IMR-90 (cell line): ENCODE measurements at regions of chr2 and their contacts with region 1.

Region 1: GRCh38 chr2:212213191-212213590 is 325.4 kb downstream of the ERBB4 start:
- DNase-seq: no peak
- ATAC-seq: no peak
- H3K4me3 ChIP-seq: no peak overlapping the region
- H3K27ac ChIP-seq: no peak overlapping the region
- H3K4me1 ChIP-seq: no peaks in the 10 kb centered on the region
- H3K27me3 ChIP-seq: no peaks in the 10 kb centered on the region
- CTCF ChIP-seq: no peak
- POLR2A ChIP-seq: no peak
- RAD21 ChIP-seq: no peak

Region 2: DNA sequence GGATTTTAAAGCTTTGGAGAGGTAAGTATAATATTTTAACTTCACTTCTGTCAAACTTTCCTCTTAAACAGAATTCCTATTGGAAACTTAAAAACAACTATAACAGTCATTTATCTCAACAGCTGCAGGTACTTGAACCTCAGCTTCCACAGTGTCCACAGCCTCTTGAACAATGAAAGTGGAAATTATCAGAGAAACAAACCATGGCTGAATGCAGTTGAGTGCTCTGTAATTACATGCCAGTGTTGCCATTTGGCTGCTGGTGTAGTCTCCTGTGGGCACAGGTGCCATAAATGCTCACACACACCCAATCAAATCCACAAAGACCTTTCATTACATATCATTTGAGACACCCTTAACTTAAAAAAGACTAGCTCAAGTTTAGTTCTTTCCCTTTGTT is 1531.7 kb before region 1 on chr2:
- CTCF ChIA-PET with region 1: no interaction called
- POLR2A ChIA-PET with region 1: no interaction called
- dilution Hi-C with region 1: no loop called
- in situ Hi-C with region 1: no loop called
- intact Hi-C with region 1: loop called (anchors 5 kb)
- DNase-seq: no peak
- ATAC-seq: no peak
- H3K4me3 ChIP-seq: no peak overlapping the region
- H3K27ac ChIP-seq: no peak overlapping the region
- H3K4me1 ChIP-seq: no peaks in the 10 kb centered on the region
- H3K27me3 ChIP-seq: no peaks in the 10 kb centered on the region
- CTCF ChIP-seq: no peak
- POLR2A ChIP-seq: no peak
- RAD21 ChIP-seq: no peak

Region 3: GRCh38 chr2:211512806-211513205 is 700.4 kb before region 1 on chr2:
- CTCF ChIA-PET with region 1: no interaction called
- POLR2A ChIA-PET with region 1: no interaction called
- dilution Hi-C with region 1: no loop called
- in situ Hi-C with region 1: no loop called
- intact Hi-C with region 1: no loop called
- DNase-seq: no peak
- ATAC-seq: no peak
- H3K4me3 ChIP-seq: no peak overlapping the region
- H3K27ac ChIP-seq: no peak overlapping the region
- H3K4me1 ChIP-seq: no peaks in the 10 kb centered on the region
- H3K27me3 ChIP-seq: no peaks in the 10 kb centered on the region
- CTCF ChIP-seq: no peak
- POLR2A ChIP-seq: no peak
- RAD21 ChIP-seq: no peak